Activated naive CD4-positive, alpha-beta T cell treated with anti-CD3 and anti-CD28 coated beads for 36 hours (primary cell): ENCODE measurements at regions of chr19 and their contacts with region 1.

Region 1: DNA sequence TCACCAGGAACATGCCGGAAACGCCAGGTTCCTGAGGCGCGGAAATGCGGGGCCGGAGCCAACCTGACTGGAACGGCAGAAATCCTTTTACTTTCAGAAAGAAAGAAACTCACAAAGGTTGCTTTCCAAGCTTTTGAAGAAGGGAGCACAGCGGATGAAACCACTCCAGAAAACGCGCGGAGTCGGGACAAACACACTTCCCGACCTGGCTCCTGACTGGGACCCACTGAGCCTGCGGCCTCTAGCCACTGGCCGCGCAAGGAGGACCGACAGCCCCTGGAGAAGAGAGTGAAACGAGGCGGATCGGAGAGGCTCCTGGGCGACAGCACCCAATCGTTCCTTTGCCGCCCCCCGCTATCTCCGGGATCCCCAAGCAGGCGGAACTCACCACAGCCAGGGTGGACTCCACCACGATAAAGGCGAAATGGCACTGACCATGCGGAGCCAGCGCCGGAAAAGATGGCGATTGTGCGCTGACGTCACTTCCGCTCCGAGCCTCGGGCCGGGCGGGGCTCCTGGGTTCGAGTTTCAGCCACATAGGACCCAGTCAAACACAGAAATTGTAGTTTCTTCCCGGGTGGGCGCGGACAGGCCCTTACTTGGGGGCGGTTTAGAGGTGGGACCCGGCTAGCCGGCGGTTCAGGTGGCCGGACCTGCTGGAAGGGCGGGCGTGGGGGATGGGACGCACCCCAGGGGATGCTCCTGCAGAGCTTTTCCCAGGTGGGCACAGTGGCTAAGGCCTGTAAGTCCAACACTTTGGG is at the start of gene ZNF121:
- DNase-seq: peak; percentile 88
- H3K4me3 Mint-ChIP-seq: peak within 1 kb of the TSS; percentile 91
- H3K27ac Mint-ChIP-seq: peak within 1 kb of the TSS; percentile 95
- H3K4me1 Mint-ChIP-seq: peaks cover 33% of the 10 kb centered on the region
- H3K27me3 Mint-ChIP-seq: peaks cover 2% of the 10 kb centered on the region
- total RNA-seq, gene ZNF121: 57.1 to 60.1 TPM

Region 2: GRCh38 chr19:9205501-9206113 is 378.6 kb before region 1 on chr19:
- CTCF ChIA-PET with region 1: interaction called, 3 read pairs
- intact Hi-C with region 1: loop called (anchors 1 kb)
- DNase-seq: peak; percentile 76
- H3K4me3 Mint-ChIP-seq: peak overlapping the region; percentile 25
- H3K27ac Mint-ChIP-seq: no peak overlapping the region
- H3K4me1 Mint-ChIP-seq: peaks cover 2% of the 10 kb centered on the region
- H3K27me3 Mint-ChIP-seq: peaks cover 2% of the 10 kb centered on the region

Region 3: GRCh38 chr19:9435279-9436268 is 148.7 kb before region 1 on chr19 and contains the start of gene ZNF266:
- CTCF ChIA-PET with region 1: interaction called, 3 read pairs
- intact Hi-C with region 1: loop called (anchors 2 kb)
- DNase-seq: peak; percentile 96
- H3K4me3 Mint-ChIP-seq: peak within 1 kb of the TSS; percentile 90
- H3K27ac Mint-ChIP-seq: peak within 1 kb of the TSS; percentile 99
- H3K4me1 Mint-ChIP-seq: peaks cover 20% of the 10 kb centered on the region
- H3K27me3 Mint-ChIP-seq: no peaks in the 10 kb centered on the region
- total RNA-seq, gene ZNF266: 19.7 to 21.9 TPM

Region 4: DNA sequence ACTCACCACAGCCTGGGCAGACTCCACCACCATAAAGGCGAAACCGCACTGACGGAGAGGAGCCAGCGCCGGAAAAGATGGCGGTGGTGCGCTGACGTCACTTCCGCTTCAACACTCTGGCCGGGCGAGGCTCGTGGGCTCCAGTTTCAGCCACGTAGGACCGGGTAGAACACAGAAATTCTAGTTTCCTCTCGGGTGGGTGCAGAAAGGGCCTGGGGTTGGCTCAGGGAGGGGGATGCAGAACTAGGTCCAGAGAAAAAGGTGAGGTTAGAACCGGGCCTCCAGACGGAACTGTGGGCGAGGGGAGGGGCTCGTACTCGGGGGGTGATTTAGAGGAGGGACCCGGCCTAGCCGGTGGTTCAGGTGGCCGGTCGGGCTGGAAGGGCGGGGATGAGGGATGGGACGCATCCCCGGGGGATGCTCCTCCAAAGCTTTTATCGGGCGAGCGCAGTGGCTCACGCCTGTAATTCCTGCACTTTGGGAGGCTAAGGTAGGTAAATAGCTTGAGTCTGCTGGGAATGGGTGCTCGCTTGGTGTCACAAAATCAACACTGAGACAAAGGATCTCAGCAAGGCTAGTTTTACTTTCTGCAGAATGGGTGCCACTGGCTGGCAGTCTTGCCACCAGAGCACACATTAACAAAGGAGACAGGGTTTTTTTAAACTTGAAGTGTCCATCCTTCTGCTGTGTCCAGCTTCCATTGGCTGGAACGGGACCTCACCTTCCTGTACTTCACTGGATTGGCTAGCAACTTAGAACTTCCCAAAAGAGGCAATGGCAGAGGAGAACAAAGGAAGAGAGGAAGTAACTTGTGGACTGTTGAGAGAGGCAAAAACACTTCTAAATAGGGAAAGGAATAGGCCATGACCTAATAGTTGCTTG is 37.1 kb after region 1 on chr19 and contains the start of gene ZNF561:
- CTCF ChIA-PET with region 1: interaction called, 3 read pairs
- intact Hi-C with region 1: loop called (anchors 1 kb)
- DNase-seq: peak; percentile 90
- H3K4me3 Mint-ChIP-seq: peak within 1 kb of the TSS; percentile 98
- H3K27ac Mint-ChIP-seq: peak within 1 kb of the TSS; percentile 99
- H3K4me1 Mint-ChIP-seq: peaks cover 18% of the 10 kb centered on the region
- H3K27me3 Mint-ChIP-seq: no peaks in the 10 kb centered on the region
- total RNA-seq, gene ZNF561: 28.7 to 29.4 TPM

Region 5: GRCh38 chr19:9785367-9786331 is 201.4 kb after region 1 on chr19:
- CTCF ChIA-PET with region 1: interaction called, 4 read pairs
- intact Hi-C with region 1: loop called (anchors 1 kb)
- DNase-seq: peak; percentile 100
- H3K4me3 Mint-ChIP-seq: peak overlapping the region; percentile 93
- H3K27ac Mint-ChIP-seq: peak overlapping the region; percentile 94
- H3K4me1 Mint-ChIP-seq: peaks cover 25% of the 10 kb centered on the region
- H3K27me3 Mint-ChIP-seq: no peaks in the 10 kb centered on the region

Region 6: DNA sequence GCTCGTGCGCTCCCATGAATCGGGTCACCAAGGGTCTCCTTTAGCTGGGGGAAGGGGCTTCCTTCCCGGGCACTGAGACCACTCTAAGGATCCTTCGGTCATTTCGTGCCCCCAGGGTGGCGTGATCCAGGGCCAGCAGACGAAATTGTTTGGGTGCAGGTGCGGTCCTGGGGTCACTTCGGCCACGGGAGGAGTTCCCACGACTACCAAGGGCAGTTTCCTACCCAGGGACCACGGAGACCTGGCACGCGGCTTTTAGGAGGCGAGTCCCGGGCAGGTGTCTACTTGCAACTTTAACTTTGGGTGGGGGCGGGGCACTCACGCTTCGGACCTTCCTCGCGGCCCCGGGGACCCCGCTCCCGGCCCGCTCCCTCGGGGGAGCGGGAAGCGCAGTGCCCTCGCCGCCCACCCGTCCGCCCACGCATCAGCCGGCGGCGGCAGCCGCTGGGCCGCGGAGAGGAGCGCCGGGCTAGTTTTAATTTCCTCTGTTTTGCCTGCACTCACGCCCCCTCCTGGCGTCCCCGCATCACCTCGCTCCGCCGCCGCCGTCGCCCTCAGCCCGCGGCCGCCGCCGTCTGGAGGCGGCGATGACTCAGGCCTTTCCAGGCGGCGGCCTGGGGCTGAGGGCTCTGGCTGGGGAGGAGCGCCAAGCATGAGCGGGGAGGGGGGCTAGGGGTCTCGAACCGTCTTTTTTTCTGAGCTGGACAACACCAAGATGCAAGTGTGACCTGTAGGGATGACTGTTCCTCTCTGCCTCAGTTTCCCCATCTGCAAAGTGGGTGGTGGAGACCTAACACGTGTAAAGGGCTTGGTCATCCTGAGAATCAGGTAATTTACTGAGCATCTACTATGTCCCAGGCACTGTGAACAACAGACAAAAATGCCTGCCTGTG is 330.3 kb after region 1 on chr19:
- CTCF ChIA-PET with region 1: no interaction called
- intact Hi-C with region 1: loop called (anchors 5 kb)
- DNase-seq: peak; percentile 90
- H3K4me3 Mint-ChIP-seq: peak overlapping the region; percentile 71
- H3K27ac Mint-ChIP-seq: no peak overlapping the region
- H3K4me1 Mint-ChIP-seq: peaks cover 4% of the 10 kb centered on the region
- H3K27me3 Mint-ChIP-seq: peaks cover 16% of the 10 kb centered on the region